ENCODE measurements at regions of chr6 and their contacts with region 1.

Region 1: GRCh38 chr6:73747289-73747688 is 51.3 kb downstream of the CD109 start:
- DNase-seq: no peak
- ATAC-seq: no peak
- H3K4me3 ChIP-seq: no peak overlapping the region
- H3K27ac ChIP-seq: no peak overlapping the region
- H3K4me1 ChIP-seq: no peaks in the 10 kb centered on the region
- H3K27me3 ChIP-seq: no peaks in the 10 kb centered on the region
- CTCF ChIP-seq: no peak

Region 2: GRCh38 chr6:75217193-75217592 is 1469.9 kb after region 1 on chr6:
- intact Hi-C with region 1: loop called in 2 of 3 experiments (anchors 5 kb)
- DNase-seq: no peak
- ATAC-seq: peak in 2 of 4 donors; percentile 38 to 57
- H3K4me3 ChIP-seq: no peak overlapping the region
- H3K27ac ChIP-seq: no peak overlapping the region
- H3K4me1 ChIP-seq: no peaks in the 10 kb centered on the region
- H3K27me3 ChIP-seq: no peaks in the 10 kb centered on the region
- CTCF ChIP-seq: no peak